Vagina (tissue), 2 donors: ENCODE measurements at regions of chr3 and their contacts with region 1.

Region 1: GRCh38 chr3:161540594-161540993 is 44.0 kb downstream of the OTOL1 start:
- DNase-seq: no peak
- H3K4me3 ChIP-seq: no peak overlapping the region
- H3K27ac ChIP-seq: no peak overlapping the region
- H3K4me1 ChIP-seq: no peaks in the 10 kb centered on the region
- H3K27me3 ChIP-seq: no peaks in the 10 kb centered on the region
- CTCF ChIP-seq: no peak
- POLR2A ChIP-seq: no peak

Region 2: GRCh38 chr3:161489395-161489794 is 51.2 kb before region 1 on chr3:
- intact Hi-C with region 1: no loop called
- DNase-seq: no peak
- H3K4me3 ChIP-seq: no peak overlapping the region
- H3K27ac ChIP-seq: no peak overlapping the region
- H3K4me1 ChIP-seq: no peaks in the 10 kb centered on the region
- H3K27me3 ChIP-seq: no peaks in the 10 kb centered on the region
- CTCF ChIP-seq: no peak
- POLR2A ChIP-seq: no peak

Region 3: GRCh38 chr3:162034368-162034767 is 493.8 kb after region 1 on chr3:
- intact Hi-C with region 1: loop called (anchors 5 kb)
- DNase-seq: no peak
- H3K4me3 ChIP-seq: no peak overlapping the region
- H3K27ac ChIP-seq: no peak overlapping the region
- H3K4me1 ChIP-seq: no peaks in the 10 kb centered on the region
- H3K27me3 ChIP-seq: no peaks in the 10 kb centered on the region
- CTCF ChIP-seq: no peak
- POLR2A ChIP-seq: no peak